AG04450 (cell line): ENCODE measurements at regions of chr1 and their contacts with region 1.

Region 1: DNA sequence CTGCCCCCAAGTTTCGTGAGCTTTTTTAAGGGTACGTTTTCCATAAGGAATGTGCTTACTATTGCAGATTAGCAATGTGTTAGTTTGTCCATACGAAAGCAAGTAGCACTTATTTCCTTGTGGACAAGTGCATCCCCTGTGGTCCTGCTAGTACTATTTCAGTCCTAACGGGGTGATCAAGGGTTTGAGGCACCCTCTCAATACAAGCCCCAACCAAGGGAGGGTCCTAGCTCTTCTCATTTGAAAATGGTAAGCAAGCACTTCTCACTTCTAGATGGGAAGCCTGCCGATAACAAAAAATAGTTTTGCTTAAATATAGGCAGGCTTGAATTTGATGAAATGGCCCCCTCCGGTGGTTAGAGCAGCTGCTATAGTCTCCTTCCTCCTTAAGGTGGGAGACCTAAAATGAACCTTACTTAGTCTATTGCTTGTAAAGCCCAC is 64.0 kb upstream of the HMCN1 start:
- DNase-seq: peak; percentile 21
- H3K4me3 ChIP-seq: no peak overlapping the region
- H3K27ac ChIP-seq: no peak overlapping the region
- H3K27me3 ChIP-seq: no peaks in the 10 kb centered on the region
- CTCF ChIP-seq: peak; percentile 78

Region 2: DNA sequence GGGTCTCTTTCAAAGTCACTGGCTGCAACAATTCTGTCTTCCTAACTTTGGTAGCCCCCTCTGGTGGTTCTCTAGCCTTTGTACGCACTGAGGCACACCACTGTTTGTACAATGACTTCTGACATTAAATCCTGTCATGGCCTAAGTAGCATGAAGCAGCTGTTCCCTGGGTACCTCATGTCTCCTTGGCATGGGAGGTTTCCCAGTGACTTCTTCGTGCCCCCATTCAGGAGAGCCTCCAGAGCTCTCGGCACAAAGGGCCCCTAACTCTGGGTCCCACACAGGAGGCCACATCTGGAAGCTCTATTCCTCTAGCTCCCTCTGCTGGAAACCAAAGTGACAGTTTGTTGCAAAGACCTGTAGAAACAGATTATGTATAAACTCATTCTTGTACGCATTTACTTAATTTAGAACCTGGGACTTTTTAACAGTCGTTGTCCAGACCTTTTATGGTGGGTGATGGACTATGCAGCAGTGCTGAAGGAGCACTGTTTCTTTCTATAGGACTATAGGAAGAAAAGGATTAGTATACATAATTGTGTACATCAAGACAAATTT is 499.8 kb before region 1 on chr1:
- CTCF ChIA-PET with region 1: interaction called, 51 read pairs
- POLR2A ChIA-PET with region 1: no interaction called
- DNase-seq: peak; percentile 23
- H3K4me3 ChIP-seq: no peak overlapping the region
- H3K27ac ChIP-seq: no peak overlapping the region
- H3K27me3 ChIP-seq: no peaks in the 10 kb centered on the region
- CTCF ChIP-seq: peak; percentile 77

Region 3: GRCh38 chr1:185292237-185292636 is 378.0 kb before region 1 on chr1:
- CTCF ChIA-PET with region 1: interaction called, 14 read pairs
- POLR2A ChIA-PET with region 1: no interaction called
- DNase-seq: no peak
- H3K4me3 ChIP-seq: no peak overlapping the region
- H3K27ac ChIP-seq: no peak overlapping the region
- H3K27me3 ChIP-seq: no peaks in the 10 kb centered on the region
- CTCF ChIP-seq: no peak

Region 4: GRCh38 chr1:185317034-185317885 is 352.9 kb before region 1 on chr1 and contains the start of gene IVNS1ABP:
- CTCF ChIA-PET with region 1: interaction called, 26 read pairs
- POLR2A ChIA-PET with region 1: interaction called, 3 read pairs
- DNase-seq: peak; percentile 67
- H3K4me3 ChIP-seq: peak within 1 kb of the TSS; percentile 83
- H3K27ac ChIP-seq: peak within 1 kb of the TSS; percentile 85
- H3K27me3 ChIP-seq: no peaks in the 10 kb centered on the region
- CTCF ChIP-seq: 0 out of 2 replicates have a peak, but pooled peaks have one; percentile 10
- polyA plus RNA-seq, gene IVNS1ABP: 48.9 and 59.6 TPM in 2 replicates

Region 5: GRCh38 chr1:185404291-185404690 is 265.9 kb before region 1 on chr1:
- CTCF ChIA-PET with region 1: no interaction called
- POLR2A ChIA-PET with region 1: no interaction called
- DNase-seq: no peak
- H3K4me3 ChIP-seq: no peak overlapping the region
- H3K27ac ChIP-seq: no peak overlapping the region
- H3K27me3 ChIP-seq: no peaks in the 10 kb centered on the region
- CTCF ChIP-seq: no peak

Region 6: GRCh38 chr1:185559684-185560331 is 110.4 kb before region 1 on chr1:
- CTCF ChIA-PET with region 1: interaction called, 10 read pairs
- POLR2A ChIA-PET with region 1: no interaction called
- DNase-seq: no peak
- H3K4me3 ChIP-seq: no peak overlapping the region
- H3K27ac ChIP-seq: no peak overlapping the region
- H3K27me3 ChIP-seq: no peaks in the 10 kb centered on the region
- CTCF ChIP-seq: peak; percentile 41

Region 7: DNA sequence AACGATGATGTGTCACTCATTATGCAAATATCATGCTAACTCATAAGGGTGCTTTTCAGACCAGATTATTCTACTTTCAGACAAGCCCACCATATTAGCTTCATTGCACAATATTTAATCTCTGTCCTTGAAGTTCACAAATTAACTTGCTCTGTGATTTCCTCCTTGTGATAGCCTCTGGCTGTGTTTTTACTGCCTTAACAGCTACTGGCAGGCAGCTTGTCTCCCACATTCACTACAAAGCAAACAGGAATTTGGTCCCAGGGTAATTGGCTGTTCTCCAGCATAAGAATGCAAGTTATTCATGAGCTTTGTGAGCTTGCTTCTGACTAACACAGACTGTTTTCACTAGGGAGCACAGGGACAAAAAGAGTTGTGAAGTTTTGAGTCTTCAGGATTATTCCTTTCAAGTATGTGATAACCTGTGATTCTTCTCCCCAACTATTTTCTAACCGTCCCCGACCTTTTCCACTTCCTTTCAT is 24.0 kb before region 1 on chr1:
- CTCF ChIA-PET with region 1: interaction called, 14 read pairs
- POLR2A ChIA-PET with region 1: no interaction called
- DNase-seq: peak; percentile 93
- H3K4me3 ChIP-seq: peak overlapping the region; percentile 21
- H3K27ac ChIP-seq: peak overlapping the region; percentile 47
- H3K27me3 ChIP-seq: no peaks in the 10 kb centered on the region
- CTCF ChIP-seq: no peak

Region 8: GRCh38 chr1:185701650-185702049 is 31.4 kb after region 1 on chr1:
- CTCF ChIA-PET with region 1: no interaction called
- POLR2A ChIA-PET with region 1: no interaction called
- DNase-seq: no peak
- H3K4me3 ChIP-seq: no peak overlapping the region
- H3K27ac ChIP-seq: no peak overlapping the region
- H3K27me3 ChIP-seq: no peaks in the 10 kb centered on the region
- CTCF ChIP-seq: no peak